ENCODE measurements at regions of chr7 and their contacts with region 1.

Region 1: DNA sequence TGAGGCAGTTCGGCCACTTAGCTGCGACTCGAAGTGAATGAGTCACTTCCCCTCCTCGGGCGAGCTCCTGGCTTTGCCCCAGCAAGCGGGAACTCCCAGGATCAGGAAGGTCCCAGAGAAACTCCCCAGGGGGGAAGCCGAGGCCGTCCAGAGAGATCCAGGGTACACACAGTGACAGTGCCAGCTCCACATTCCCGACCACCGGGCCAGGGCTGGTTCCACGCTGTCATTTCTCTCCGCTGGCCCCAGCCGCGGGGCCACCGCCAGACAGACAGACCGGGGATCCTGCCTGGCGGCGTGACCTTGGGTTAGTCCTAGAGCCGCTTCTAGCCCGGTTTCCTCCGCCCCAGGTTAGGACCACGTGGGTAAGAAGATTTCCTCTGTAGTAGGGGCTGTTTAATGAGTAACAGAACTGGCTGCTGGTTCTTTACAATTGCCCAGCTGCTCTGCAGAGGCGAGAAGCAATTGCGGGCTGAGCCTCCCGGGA is 463 bp upstream of the UPP1 start:
- DNase-seq: peak in 1 of 5 donors; percentile 87
- H3K4me3 ChIP-seq: peak overlapping the region; percentile 70 to 88
- H3K4me3 Mint-ChIP-seq: peak overlapping the region; percentile 86 to 97 (median 93)
- H3K27ac ChIP-seq: peak overlapping the region; percentile 76
- H3K27ac Mint-ChIP-seq: peak overlapping the region; percentile 88 to 98 (median 94)
- H3K4me1 ChIP-seq: peaks cover 90% of the 10 kb centered on the region
- H3K4me1 Mint-ChIP-seq: peaks cover 54 to 89% (median 72%) of the 10 kb centered on the region in 4 donors
- H3K27me3 ChIP-seq: no peaks in the 10 kb centered on the region
- H3K27me3 Mint-ChIP-seq: no peaks in the 10 kb centered on the region

Region 2: DNA sequence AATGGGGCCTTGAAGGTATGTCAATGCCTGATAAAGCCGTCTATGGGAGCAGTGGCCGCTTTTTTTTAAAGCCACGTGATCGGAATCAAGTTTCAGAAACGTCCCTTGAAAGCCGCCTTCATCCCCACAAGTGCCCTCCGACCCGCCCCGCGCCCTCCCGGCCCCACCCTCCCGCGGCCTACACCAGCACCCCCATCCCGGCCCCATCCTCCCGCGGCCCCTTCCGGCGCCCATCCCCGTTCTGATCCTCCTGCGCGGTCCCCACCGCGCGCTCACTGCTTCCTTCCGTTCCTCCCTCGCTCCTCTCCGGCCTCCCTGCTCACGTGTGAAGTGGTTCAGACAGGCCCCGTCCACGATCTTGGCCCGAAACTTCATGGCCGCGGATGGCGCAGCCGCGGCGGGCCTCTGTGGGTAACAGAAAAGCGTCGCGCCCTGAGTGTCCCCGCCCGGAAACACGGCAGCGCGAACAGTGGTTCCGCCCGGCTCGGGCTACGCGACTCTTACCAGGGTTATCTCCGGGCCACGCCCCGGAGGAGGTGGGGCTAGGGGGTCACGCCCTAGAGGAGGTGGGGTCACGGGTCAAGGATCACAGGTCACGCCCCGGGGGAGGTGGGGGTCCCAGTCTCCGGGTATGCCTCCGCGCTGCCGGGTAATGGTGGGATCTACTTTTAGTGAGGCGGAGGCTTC is 109.3 kb before region 1 on chr7 and contains the start of gene HUS1:
- CTCF ChIA-PET with region 1: interaction called, 3 read pairs
- POLR2A ChIA-PET with region 1: interaction called, 5 read pairs
- intact Hi-C with region 1: loop called (anchors 1 kb)
- DNase-seq: peak; percentile 89 to 94 (median 90)
- H3K4me3 ChIP-seq: peak within 1 kb of the TSS; percentile 72 to 81
- H3K4me3 Mint-ChIP-seq: peak within 1 kb of the TSS; percentile 92 to 99 (median 95)
- H3K27ac ChIP-seq: peak within 1 kb of the TSS; percentile 83
- H3K27ac Mint-ChIP-seq: peak within 1 kb of the TSS; percentile 97 to 100 (median 98)
- H3K4me1 ChIP-seq: peaks cover 23% of the 10 kb centered on the region
- H3K4me1 Mint-ChIP-seq: peaks cover 14 to 32% (median 24%) of the 10 kb centered on the region in 4 donors
- H3K27me3 ChIP-seq: no peaks in the 10 kb centered on the region
- H3K27me3 Mint-ChIP-seq: no peaks in the 10 kb centered on the region
- total RNA-seq, gene HUS1: 72.5 to 74.1 TPM

Region 3: DNA sequence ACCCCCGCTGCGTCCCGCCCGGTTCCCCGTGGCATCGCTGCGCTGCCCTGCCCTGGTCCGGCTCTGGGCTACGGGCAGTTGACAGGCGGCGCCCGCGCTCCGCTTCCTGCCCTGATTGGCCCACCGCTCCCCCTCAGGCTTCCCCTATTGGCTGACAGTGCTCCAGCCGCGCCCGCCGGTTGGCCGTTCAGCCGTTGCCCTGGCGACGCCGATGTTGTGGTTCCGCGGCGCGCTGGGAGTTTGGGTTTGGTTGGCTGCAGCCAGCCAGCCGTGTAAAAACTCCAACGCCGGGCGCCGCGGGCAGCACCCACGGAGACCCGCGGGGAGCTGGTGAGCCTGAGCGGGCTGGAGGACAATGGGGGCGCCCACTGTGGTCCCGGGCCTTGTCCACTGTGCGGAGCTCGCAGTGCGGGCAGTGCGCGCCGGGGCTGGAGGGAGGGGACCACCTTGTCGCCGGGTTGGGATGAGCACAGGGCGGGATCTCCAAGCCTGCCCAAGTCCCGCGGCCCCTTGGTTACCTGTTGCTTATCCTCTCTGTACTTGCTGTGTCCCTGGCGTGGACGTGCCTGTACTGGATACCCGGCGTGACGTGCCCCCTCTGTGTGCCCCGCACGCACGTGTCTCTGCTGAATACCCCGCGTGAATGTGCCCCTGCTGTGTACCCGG is 53.2 kb before region 1 on chr7 and contains the start of gene C7orf57:
- CTCF ChIA-PET with region 1: interaction called, 4 read pairs
- POLR2A ChIA-PET with region 1: interaction called, 13 read pairs
- intact Hi-C with region 1: loop called (anchors 1 kb)
- DNase-seq: peak; percentile 83 to 88 (median 86)
- H3K4me3 ChIP-seq: peak within 1 kb of the TSS; percentile 68 to 69
- H3K4me3 Mint-ChIP-seq: peak within 1 kb of the TSS; percentile 78 to 94 (median 88)
- H3K27ac ChIP-seq: peak within 1 kb of the TSS; percentile 11
- H3K27ac Mint-ChIP-seq: peak within 1 kb of the TSS; percentile 43 to 96 (median 88)
- H3K4me1 ChIP-seq: peaks cover 7% of the 10 kb centered on the region
- H3K4me1 Mint-ChIP-seq: peaks cover 4 to 11% (median 8%) of the 10 kb centered on the region in 4 donors
- H3K27me3 ChIP-seq: no peaks in the 10 kb centered on the region
- H3K27me3 Mint-ChIP-seq: peaks cover 6 to 12% of the 10 kb centered on the region in 2 donors
- total RNA-seq, gene C7orf57: not detected

Region 4: GRCh38 chr7:48046458-48046857 is 42.1 kb before region 1 on chr7:
- CTCF ChIA-PET with region 1: no interaction called
- POLR2A ChIA-PET with region 1: interaction called, 12 read pairs
- intact Hi-C with region 1: no loop called
- DNase-seq: peak; percentile 32 to 55 (median 39)
- H3K4me3 ChIP-seq: no peak overlapping the region
- H3K4me3 Mint-ChIP-seq: peak overlapping the region in 5 of 8 donors; percentile 23 to 47 (median 41)
- H3K27ac ChIP-seq: no peak overlapping the region
- H3K27ac Mint-ChIP-seq: peak overlapping the region; percentile 1 to 80 (median 62)
- H3K4me1 ChIP-seq: peaks cover 27% of the 10 kb centered on the region
- H3K4me1 Mint-ChIP-seq: peaks cover 21 to 38% (median 31%) of the 10 kb centered on the region in 4 donors
- H3K27me3 ChIP-seq: no peaks in the 10 kb centered on the region
- H3K27me3 Mint-ChIP-seq: no peaks in the 10 kb centered on the region

Region 5: GRCh38 chr7:48101968-48102367 is 13.4 kb after region 1 on chr7:
- CTCF ChIA-PET with region 1: interaction called, 23 read pairs
- POLR2A ChIA-PET with region 1: interaction called, 20 read pairs
- intact Hi-C with region 1: loop called (anchors 1 kb)
- DNase-seq: peak in 2 of 5 donors; percentile 9 to 18
- H3K4me3 ChIP-seq: no peak overlapping the region
- H3K4me3 Mint-ChIP-seq: no peak overlapping the region
- H3K27ac ChIP-seq: no peak overlapping the region
- H3K27ac Mint-ChIP-seq: peak overlapping the region; percentile 59 to 88 (median 80)
- H3K4me1 ChIP-seq: peaks cover 55% of the 10 kb centered on the region
- H3K4me1 Mint-ChIP-seq: peaks cover 38 to 61% (median 40%) of the 10 kb centered on the region in 4 donors
- H3K27me3 ChIP-seq: no peaks in the 10 kb centered on the region
- H3K27me3 Mint-ChIP-seq: no peaks in the 10 kb centered on the region

Measured in CD4-positive, alpha-beta memory T cell (primary cell).